PC-3 (cell line): ENCODE measurements at regions of chr6 and their contacts with region 1.

Region 1: DNA sequence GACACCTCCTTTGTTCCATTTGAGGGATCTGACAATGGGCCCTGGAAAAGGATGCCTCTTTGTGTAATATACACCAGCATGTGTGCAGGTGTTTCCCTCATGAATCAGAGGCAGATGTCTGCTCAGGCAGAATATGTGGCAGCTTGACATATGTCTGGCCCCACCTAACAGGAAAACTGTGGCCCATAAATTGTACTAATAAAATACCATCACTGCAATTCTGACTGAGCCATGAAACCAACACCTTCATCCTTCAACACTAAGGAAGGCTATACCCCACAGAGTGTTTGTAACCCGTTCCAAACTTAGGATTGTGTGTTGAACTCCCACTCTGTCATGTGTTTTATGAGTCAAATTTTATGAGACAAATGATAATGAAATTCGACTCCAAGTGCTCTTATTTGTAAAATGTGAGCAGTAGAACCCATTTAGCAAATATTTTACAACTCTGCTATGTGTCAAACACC is 22.7 kb downstream of the LAMA4 start:
- DNase-seq: peak; percentile 80
- ATAC-seq: peak; percentile 92
- H3K4me3 ChIP-seq: no peak overlapping the region
- H3K27ac ChIP-seq: peak overlapping the region; percentile 39
- H3K4me1 ChIP-seq: peaks cover 34% of the 10 kb centered on the region
- H3K27me3 ChIP-seq: no peaks in the 10 kb centered on the region
- CTCF ChIP-seq: no peak

Region 2: GRCh38 chr6:111899531-111899930 is 332.1 kb before region 1 on chr6:
- CTCF ChIA-PET with region 1: no interaction called
- POLR2A ChIA-PET with region 1: no interaction called
- intact Hi-C with region 1: no loop called
- DNase-seq: no peak
- ATAC-seq: no peak
- H3K4me3 ChIP-seq: no peak overlapping the region
- H3K27ac ChIP-seq: no peak overlapping the region
- H3K4me1 ChIP-seq: 0 out of 2 replicates have a peak, but pooled peaks cover 3% of the 10 kb centered on the region
- H3K27me3 ChIP-seq: no peaks in the 10 kb centered on the region
- CTCF ChIP-seq: no peak

Region 3: DNA sequence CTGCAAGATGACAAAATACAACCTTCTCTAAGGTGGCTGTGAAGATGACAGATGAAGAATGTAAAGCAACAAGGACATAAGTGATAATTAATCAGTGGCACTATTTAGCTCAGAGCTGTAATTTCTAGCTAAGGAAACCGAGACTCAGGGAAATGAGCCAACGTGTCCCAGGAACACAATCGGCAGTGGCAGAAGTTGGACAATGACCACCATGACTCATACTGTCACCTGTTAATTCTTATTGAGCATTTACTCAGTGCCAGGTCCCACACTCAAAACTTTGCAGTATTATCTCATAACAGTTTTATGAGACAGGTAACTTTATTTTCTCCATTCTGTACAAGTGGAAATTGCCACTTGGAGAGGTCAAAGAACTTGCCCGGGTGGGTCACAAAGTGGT is 33.0 kb before region 1 on chr6:
- CTCF ChIA-PET with region 1: no interaction called
- POLR2A ChIA-PET with region 1: no interaction called
- intact Hi-C with region 1: no loop called
- DNase-seq: no peak
- ATAC-seq: no peak
- H3K4me3 ChIP-seq: no peak overlapping the region
- H3K27ac ChIP-seq: no peak overlapping the region
- H3K4me1 ChIP-seq: peaks cover 27% of the 10 kb centered on the region
- H3K27me3 ChIP-seq: no peaks in the 10 kb centered on the region
- CTCF ChIP-seq: no peak

Region 4: GRCh38 chr6:112214739-112215269 is 16.8 kb before region 1 on chr6:
- CTCF ChIA-PET with region 1: no interaction called
- POLR2A ChIA-PET with region 1: no interaction called
- intact Hi-C with region 1: loop called (anchors 2 kb)
- DNase-seq: peak; percentile 84
- ATAC-seq: peak; percentile 86
- H3K4me3 ChIP-seq: peak overlapping the region; percentile 29; the same call in 1 of the 2 replicates
- H3K27ac ChIP-seq: peak overlapping the region; percentile 82
- H3K4me1 ChIP-seq: peaks cover 39% of the 10 kb centered on the region
- H3K27me3 ChIP-seq: no peaks in the 10 kb centered on the region
- CTCF ChIP-seq: no peak

Region 5: GRCh38 chr6:112296122-112296521 is 64.5 kb after region 1 on chr6:
- CTCF ChIA-PET with region 1: no interaction called
- POLR2A ChIA-PET with region 1: no interaction called
- intact Hi-C with region 1: loop called (anchors 2 kb)
- DNase-seq: peak; percentile 56
- ATAC-seq: peak; percentile 12; the same call in 1 of the 2 replicates
- H3K4me3 ChIP-seq: no peak overlapping the region
- H3K27ac ChIP-seq: no peak overlapping the region
- H3K4me1 ChIP-seq: peaks cover 47% of the 10 kb centered on the region
- H3K27me3 ChIP-seq: no peaks in the 10 kb centered on the region
- CTCF ChIP-seq: peak; percentile 62